ENCODE measurements at regions of chr7 and their contacts with region 1.

Region 1: GRCh38 chr7:146902728-146903127 is 786.1 kb downstream of the CNTNAP2 start:
- DNase-seq: no peak
- ATAC-seq: no peak
- H3K4me3 ChIP-seq: no peak overlapping the region
- H3K27ac ChIP-seq: no peak overlapping the region
- H3K4me1 ChIP-seq: no peaks in the 10 kb centered on the region
- H3K27me3 ChIP-seq: no peaks in the 10 kb centered on the region
- CTCF ChIP-seq: no peak
- POLR2A ChIP-seq: no peak

Region 2: DNA sequence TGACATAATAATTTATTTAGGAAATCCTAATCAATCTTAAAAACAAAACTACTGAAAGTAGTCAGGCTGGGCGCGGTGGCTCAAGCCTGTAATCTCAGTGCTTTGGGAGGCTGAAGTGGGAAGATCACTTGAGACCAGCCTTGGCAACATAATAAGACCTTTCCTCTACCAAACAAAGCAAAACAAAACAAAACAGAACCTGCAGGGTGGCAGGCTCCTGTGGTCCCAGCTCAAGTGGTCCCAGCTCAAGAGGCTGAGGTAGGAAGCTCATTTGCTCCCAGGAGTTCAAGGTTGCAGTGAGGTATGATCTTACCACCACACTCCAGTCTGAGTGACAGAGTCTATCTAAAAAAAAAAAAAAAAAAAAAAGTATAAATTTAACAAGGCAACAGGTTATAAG is 38.1 kb before region 1 on chr7:
- intact Hi-C with region 1: loop called in 1 of 10 experiments (anchors 2 kb)
- DNase-seq: no peak
- ATAC-seq: no peak
- H3K4me3 ChIP-seq: no peak overlapping the region
- H3K27ac ChIP-seq: no peak overlapping the region
- H3K4me1 ChIP-seq: no peaks in the 10 kb centered on the region
- H3K27me3 ChIP-seq: no peaks in the 10 kb centered on the region
- CTCF ChIP-seq: no peak
- POLR2A ChIP-seq: no peak

Region 3: GRCh38 chr7:146948703-146949102 is 46.0 kb after region 1 on chr7:
- intact Hi-C with region 1: no loop called
- DNase-seq: no peak
- ATAC-seq: no peak
- H3K4me3 ChIP-seq: no peak overlapping the region
- H3K27ac ChIP-seq: no peak overlapping the region
- H3K4me1 ChIP-seq: no peaks in the 10 kb centered on the region
- H3K27me3 ChIP-seq: no peaks in the 10 kb centered on the region
- CTCF ChIP-seq: no peak
- POLR2A ChIP-seq: no peak